ENCODE measurements at regions of chr19 and their contacts with region 1.

Region 1: DNA sequence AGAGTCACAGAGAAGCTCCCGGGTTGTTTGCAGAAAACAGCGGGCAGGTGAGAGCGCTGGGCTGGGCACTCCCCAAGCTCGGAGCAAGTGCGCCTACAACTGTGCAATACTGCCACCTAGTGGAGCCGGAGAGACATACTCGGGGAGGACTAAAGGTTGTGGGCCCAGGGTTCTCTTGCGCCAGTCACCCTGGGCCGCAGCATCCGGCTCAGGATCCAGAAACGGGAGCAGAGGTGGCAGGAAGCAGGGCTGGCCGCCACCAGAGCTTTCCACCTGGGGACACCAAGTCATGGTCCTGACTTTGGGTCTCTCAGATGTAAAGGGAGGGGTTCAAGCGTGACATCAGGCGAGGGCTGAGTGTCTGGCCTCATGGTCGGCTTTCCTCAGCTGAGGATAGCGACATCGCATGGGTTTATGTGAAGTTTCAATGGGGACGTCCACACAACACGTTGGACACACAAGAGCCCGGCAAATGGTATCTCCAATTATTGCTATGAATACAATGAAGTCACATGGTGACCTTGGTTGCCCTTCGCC is 11.2 kb upstream of the KLK4 start:
- DNase-seq: peak; percentile 84
- H3K27ac ChIP-seq: no peak overlapping the region
- CTCF ChIP-seq: peak; percentile 81

Region 2: DNA sequence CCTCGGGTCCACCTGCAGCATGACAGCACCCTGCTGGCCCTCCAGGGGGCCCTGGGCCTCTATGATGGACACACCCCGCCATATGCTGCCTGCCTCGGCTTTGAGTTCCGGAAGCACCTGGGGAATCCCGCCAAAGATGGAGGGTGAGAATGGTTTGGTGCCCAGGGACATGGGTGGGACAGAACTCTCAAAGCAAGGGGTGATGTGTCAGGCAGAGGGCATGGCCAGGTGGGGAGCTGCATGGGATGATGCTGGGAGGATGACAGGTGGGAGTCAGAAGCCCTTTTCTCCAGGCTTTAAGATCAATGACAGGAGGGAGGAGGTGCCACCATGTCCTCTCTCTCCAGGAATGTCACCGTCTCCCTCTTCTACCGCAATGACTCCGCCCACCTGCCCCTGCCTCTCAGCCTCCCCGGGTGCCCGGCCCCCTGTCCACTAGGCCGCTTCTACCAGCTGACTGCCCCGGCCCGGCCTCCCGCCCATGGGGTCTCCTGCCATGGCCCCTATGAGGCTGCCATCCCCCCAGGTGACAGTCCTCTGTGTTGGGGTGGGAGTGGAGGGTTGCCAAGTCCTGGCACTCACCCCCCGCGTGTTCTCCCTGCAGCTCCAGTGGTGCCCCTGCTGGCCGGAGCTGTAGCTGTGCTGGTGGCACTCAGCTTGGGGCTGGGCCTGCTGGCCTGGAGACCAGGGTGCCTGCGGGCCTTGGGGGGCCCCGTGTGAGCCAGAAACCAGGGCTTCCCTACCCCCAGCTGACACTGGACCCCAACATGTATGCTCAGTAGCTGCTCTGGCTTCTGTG is 127.7 kb before region 1 on chr19:
- CTCF ChIA-PET with region 1: interaction called, 11 read pairs
- POLR2A ChIA-PET with region 1: interaction called, 3 read pairs
- DNase-seq: no peak
- H3K27ac ChIP-seq: peak overlapping the region; percentile 63
- CTCF ChIP-seq: no peak

Region 3: DNA sequence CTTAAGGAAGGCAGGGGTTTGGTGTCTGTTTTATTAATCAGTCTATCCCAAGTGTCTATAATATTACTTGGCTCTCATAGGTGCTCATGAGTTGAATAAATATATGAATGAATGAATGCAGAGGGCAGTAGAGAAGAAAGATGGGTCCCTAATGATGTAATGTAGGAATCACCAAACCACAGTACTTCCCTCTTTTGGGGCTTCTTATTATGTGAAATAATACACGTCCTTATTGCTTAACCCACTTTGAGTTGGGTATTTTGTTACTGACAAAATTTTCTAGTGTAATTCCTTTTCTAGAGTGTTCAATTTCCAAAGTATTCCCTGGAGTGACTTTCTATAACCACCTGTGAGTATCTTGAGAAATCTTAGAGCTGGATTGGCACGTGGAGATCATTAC is 17.2 kb after region 1 on chr19:
- CTCF ChIA-PET with region 1: no interaction called
- POLR2A ChIA-PET with region 1: no interaction called
- DNase-seq: no peak
- H3K27ac ChIP-seq: no peak overlapping the region
- CTCF ChIP-seq: no peak

Region 4: GRCh38 chr19:50949792-50950320 is 27.5 kb after region 1 on chr19:
- CTCF ChIA-PET with region 1: no interaction called
- POLR2A ChIA-PET with region 1: no interaction called
- DNase-seq: no peak
- H3K27ac ChIP-seq: no peak overlapping the region
- CTCF ChIP-seq: no peak

Measured in RWPE1 (cell line).